Endothelial cell of umbilical vein (primary cell): ENCODE measurements at regions of chr3 and their contacts with region 1.

Region 1: DNA sequence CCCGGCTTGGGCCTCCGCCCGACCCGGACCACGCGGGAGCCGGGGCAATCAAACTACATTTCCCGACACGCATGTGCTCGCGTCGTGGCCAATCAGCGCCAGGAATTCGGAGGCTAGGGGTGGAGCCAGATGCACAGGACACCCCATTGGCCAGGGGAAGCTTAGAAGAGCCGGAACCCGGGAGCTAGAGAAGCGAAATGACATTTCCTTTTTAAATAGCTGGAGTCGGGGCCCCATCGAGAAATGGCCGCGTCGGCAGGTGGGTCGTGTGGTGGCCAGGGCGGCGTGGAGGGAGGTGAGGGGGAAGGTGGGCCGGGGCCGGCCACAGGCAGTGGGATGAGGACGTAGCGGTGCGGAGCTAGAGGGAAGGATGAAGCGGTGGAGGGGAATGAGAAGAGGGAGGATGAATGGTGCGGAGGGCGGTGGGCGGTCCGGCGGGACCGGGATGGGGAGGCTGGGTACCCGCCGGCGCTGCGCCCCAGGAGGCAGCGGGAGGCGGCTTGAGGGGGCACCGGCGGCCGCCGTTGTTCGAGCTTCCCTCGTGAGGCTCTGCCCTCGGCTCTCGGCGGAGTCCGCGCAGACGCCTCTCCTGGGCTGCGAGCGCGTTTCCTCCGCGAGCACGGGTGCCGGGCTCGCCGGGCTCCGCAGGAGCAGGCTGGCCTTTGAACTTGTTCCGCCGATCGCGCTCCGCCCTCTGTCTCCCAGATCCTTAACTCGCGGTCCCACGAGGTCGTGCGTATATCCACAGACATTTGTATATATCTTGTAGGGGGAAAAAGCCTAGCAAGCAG is at the start of gene KBTBD8:
- DNase-seq: peak; percentile 99
- H3K4me3 ChIP-seq: peak within 1 kb of the TSS; percentile 76 to 93 (median 82)
- H3K27ac ChIP-seq: peak within 1 kb of the TSS; percentile 35
- H3K4me1 ChIP-seq: peaks cover 17% of the 10 kb centered on the region
- H3K27me3 ChIP-seq: peaks cover 0 to 15% of the 10 kb centered on the region in 2 experiments
- CTCF ChIP-seq: no peak
- POLR2A ChIP-seq: peak; percentile 45
- total RNA-seq, gene KBTBD8: 1.1 and 3.2 TPM in 2 replicates

Region 2: GRCh38 chr3:67083277-67083676 is 85.0 kb after region 1 on chr3:
- CTCF ChIA-PET with region 1: interaction called, 5 read pairs
- POLR2A ChIA-PET with region 1: no interaction called
- dilution Hi-C with region 1: no loop called
- intact Hi-C with region 1: loop called (anchors 1 kb)
- DNase-seq: peak; percentile 50
- H3K4me3 ChIP-seq: no peak overlapping the region
- H3K27ac ChIP-seq: peak overlapping the region; percentile 78
- H3K4me1 ChIP-seq: peaks cover 14% of the 10 kb centered on the region
- H3K27me3 ChIP-seq: no peaks in the 10 kb centered on the region
- CTCF ChIP-seq: no peak
- POLR2A ChIP-seq: no peak

Region 3: GRCh38 chr3:67090474-67090873 is 92.2 kb after region 1 on chr3:
- CTCF ChIA-PET with region 1: no interaction called
- POLR2A ChIA-PET with region 1: no interaction called
- dilution Hi-C with region 1: no loop called
- intact Hi-C with region 1: loop called (anchors 1 kb)
- DNase-seq: peak; percentile 84
- H3K4me3 ChIP-seq: no peak overlapping the region
- H3K27ac ChIP-seq: peak overlapping the region; percentile 46
- H3K4me1 ChIP-seq: peaks cover 8% of the 10 kb centered on the region
- H3K27me3 ChIP-seq: no peaks in the 10 kb centered on the region
- CTCF ChIP-seq: no peak
- POLR2A ChIP-seq: no peak